B cell (primary cell): ENCODE measurements at regions of chr10 and their contacts with region 1.

Region 1: DNA sequence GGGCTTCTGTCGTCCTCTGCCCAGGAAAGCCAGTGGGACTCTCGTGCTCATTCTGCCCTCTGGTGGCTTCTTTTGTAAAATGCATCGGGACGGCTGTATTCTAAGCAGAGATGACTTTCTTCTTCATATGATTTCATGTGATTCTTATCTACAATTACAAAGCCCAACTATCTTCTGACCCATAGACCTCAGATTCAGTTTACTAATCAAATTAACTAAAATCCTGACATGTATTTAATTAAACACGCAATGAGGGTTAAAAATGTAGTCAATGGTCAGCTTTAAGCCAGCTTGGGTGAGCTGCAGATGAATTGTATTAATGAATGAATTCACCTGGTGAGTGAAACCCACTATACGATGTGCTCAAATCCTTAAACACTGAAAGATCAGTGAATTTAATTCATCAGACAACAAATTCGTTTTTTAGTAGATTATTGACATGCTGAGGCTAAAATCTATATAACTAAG is 117.6 kb upstream of the FAM204A start:
- DNase-seq: peak; percentile 52
- ATAC-seq: no peak
- H3K4me3 ChIP-seq: no peak overlapping the region
- H3K4me3 Mint-ChIP-seq: peak overlapping the region; percentile 60
- H3K27ac ChIP-seq: no peak overlapping the region
- H3K27ac Mint-ChIP-seq: no peak overlapping the region
- H3K4me1 ChIP-seq: peaks cover 0 to 3% of the 10 kb centered on the region in 2 donors
- H3K4me1 Mint-ChIP-seq: peaks cover 4% of the 10 kb centered on the region
- H3K27me3 ChIP-seq: peaks cover 0 to 10% (median 4%) of the 10 kb centered on the region in 4 experiments
- H3K27me3 Mint-ChIP-seq: peaks cover 36% of the 10 kb centered on the region
- CTCF ChIP-seq: peak; percentile 85

Region 2: DNA sequence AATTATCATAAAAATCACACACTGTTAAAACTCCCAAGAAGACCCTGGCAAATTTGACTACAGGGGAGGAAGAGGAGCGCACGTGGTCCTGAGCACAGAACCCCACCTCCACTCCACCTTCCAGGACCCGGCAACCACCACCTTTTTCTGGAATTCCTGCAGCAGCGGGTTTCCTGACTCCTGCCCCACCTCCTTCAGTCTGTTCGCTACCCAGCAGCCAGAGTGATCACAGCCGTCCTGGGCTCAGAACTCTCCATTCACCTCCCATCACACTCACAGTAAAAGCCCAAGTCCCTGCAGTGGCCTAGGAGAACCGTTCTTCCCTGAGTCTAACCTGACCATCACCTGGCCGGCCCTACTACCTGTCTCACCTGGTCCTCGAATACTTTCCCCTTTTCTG is 10.2 kb before region 1 on chr10:
- CTCF ChIA-PET with region 1: interaction called, 10 read pairs
- POLR2A ChIA-PET with region 1: no interaction called
- intact Hi-C with region 1: no loop called
- DNase-seq: no peak
- ATAC-seq: no peak
- H3K4me3 ChIP-seq: no peak overlapping the region
- H3K4me3 Mint-ChIP-seq: no peak overlapping the region
- H3K27ac ChIP-seq: no peak overlapping the region
- H3K27ac Mint-ChIP-seq: no peak overlapping the region
- H3K4me1 ChIP-seq: no peaks in the 10 kb centered on the region
- H3K4me1 Mint-ChIP-seq: no peaks in the 10 kb centered on the region
- H3K27me3 ChIP-seq: peaks cover 0 to 18% (median 3%) of the 10 kb centered on the region in 4 experiments
- H3K27me3 Mint-ChIP-seq: peaks cover 36% of the 10 kb centered on the region
- CTCF ChIP-seq: no peak

Region 3: GRCh38 chr10:118471863-118472262 is 12.1 kb after region 1 on chr10:
- CTCF ChIA-PET with region 1: interaction called, 36 read pairs
- POLR2A ChIA-PET with region 1: no interaction called
- intact Hi-C with region 1: no loop called
- DNase-seq: no peak
- ATAC-seq: no peak
- H3K4me3 ChIP-seq: no peak overlapping the region
- H3K4me3 Mint-ChIP-seq: no peak overlapping the region
- H3K27ac ChIP-seq: no peak overlapping the region
- H3K27ac Mint-ChIP-seq: no peak overlapping the region
- H3K4me1 ChIP-seq: no peaks in the 10 kb centered on the region
- H3K4me1 Mint-ChIP-seq: no peaks in the 10 kb centered on the region
- H3K27me3 ChIP-seq: peaks cover 0 to 3% (median 0%) of the 10 kb centered on the region in 4 experiments
- H3K27me3 Mint-ChIP-seq: peaks cover 37% of the 10 kb centered on the region
- CTCF ChIP-seq: no peak